Activated CD4-positive, alpha-beta memory T cell treated with anti-CD3 and anti-CD28 coated beads, Interleukin-2, amount 10 ng/mL, durations not matched to agents 7 days and 5 days (primary cell): ENCODE measurements at regions of chr6 and their contacts with region 1.

Region 1: DNA sequence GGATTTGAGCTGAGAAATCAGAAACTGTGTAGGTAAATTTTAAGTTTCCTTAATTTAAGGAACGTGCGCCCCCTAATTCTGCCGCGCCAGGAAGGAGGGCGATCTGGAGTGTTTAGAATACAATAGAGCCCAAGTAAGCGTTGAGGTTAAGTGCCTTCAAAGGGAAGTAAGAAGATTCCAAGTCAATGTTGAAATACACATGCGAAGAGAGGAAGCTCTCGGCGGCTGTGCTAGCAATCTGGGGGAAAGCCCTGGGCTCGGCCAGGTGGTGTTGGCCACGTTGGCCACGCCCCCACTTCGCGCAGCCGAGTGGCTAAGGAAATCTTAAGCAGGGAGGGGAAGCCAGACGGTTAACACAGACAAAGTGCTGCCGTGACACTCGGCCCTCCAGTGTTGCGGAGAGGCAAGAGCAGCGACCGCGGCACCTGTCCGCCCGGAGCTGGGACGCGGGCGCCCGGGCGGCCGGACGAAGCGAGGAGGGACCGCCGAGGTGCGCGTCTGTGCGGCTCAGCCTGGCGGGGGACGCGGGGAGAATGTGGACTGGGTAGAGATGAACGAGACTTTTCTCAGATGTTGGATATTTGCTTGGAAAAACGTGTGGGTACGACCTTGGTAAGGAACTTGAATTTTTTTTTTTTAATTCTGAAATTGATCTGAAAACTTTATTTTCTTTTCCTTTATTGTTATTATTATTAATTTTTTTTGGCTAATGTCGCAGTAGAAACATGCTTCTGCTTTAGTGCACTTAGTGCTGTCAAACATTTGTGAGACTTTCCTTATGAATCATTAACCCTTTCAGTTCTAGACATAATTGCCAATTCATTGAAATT is at the start of gene PRDM1:
- DNase-seq: peak; percentile 90
- H3K4me3 Mint-ChIP-seq: peak within 1 kb of the TSS; percentile 97
- H3K27ac Mint-ChIP-seq: peak within 1 kb of the TSS; percentile 71
- H3K4me1 Mint-ChIP-seq: peaks cover 68% of the 10 kb centered on the region
- H3K27me3 Mint-ChIP-seq: no peaks in the 10 kb centered on the region
- total RNA-seq, gene PRDM1: 112 to 115 TPM

Region 2: GRCh38 chr6:105431226-105431625 is 655.0 kb before region 1 on chr6:
- CTCF ChIA-PET with region 1: interaction called, 10 read pairs
- POLR2A ChIA-PET with region 1: no interaction called
- DNase-seq: no peak
- H3K4me3 Mint-ChIP-seq: no peak overlapping the region
- H3K27ac Mint-ChIP-seq: no peak overlapping the region
- H3K4me1 Mint-ChIP-seq: peaks cover 3% of the 10 kb centered on the region
- H3K27me3 Mint-ChIP-seq: peaks cover 4% of the 10 kb centered on the region

Region 3: GRCh38 chr6:105646391-105646867 is 439.8 kb before region 1 on chr6:
- CTCF ChIA-PET with region 1: interaction called, 4 read pairs
- POLR2A ChIA-PET with region 1: interaction called, 50 read pairs
- DNase-seq: peak; percentile 77
- H3K4me3 Mint-ChIP-seq: peak overlapping the region; percentile 40
- H3K27ac Mint-ChIP-seq: peak overlapping the region; percentile 98
- H3K4me1 Mint-ChIP-seq: peaks cover 86% of the 10 kb centered on the region
- H3K27me3 Mint-ChIP-seq: no peaks in the 10 kb centered on the region

Region 4: GRCh38 chr6:105898286-105898685 is 187.9 kb before region 1 on chr6:
- CTCF ChIA-PET with region 1: interaction called, 7 read pairs
- POLR2A ChIA-PET with region 1: interaction called, 10 read pairs
- DNase-seq: peak; percentile 62
- H3K4me3 Mint-ChIP-seq: no peak overlapping the region
- H3K27ac Mint-ChIP-seq: no peak overlapping the region
- H3K4me1 Mint-ChIP-seq: peaks cover 27% of the 10 kb centered on the region
- H3K27me3 Mint-ChIP-seq: no peaks in the 10 kb centered on the region

Region 5: GRCh38 chr6:105981002-105981887 is 105.0 kb before region 1 on chr6:
- CTCF ChIA-PET with region 1: interaction called, 3 read pairs
- POLR2A ChIA-PET with region 1: interaction called, 14 read pairs
- DNase-seq: peak; percentile 70
- H3K4me3 Mint-ChIP-seq: peak overlapping the region; percentile 87
- H3K27ac Mint-ChIP-seq: peak overlapping the region; percentile 93
- H3K4me1 Mint-ChIP-seq: peaks cover 78% of the 10 kb centered on the region
- H3K27me3 Mint-ChIP-seq: no peaks in the 10 kb centered on the region

Region 6: DNA sequence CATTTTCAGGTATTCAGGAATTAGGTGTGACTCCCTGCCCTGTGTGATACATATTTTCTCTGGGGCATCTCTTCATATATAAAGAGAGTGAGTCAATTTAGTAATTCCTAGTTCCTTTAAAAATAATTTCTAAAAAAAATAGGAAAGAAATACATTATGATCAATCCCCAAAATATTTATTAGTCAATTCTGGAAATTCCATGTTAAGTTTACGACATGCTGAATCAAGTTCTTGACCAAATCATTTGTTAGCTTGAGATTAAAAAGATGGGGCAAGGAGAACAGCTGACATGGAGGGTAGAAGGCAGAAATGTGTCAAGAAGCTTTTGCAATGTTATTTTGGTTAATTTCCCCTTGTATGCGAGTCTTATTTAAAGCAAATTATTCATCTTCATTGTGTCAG is 22.8 kb before region 1 on chr6:
- CTCF ChIA-PET with region 1: no interaction called
- POLR2A ChIA-PET with region 1: no interaction called
- DNase-seq: no peak
- H3K4me3 Mint-ChIP-seq: no peak overlapping the region
- H3K27ac Mint-ChIP-seq: no peak overlapping the region
- H3K4me1 Mint-ChIP-seq: peaks cover 2% of the 10 kb centered on the region
- H3K27me3 Mint-ChIP-seq: no peaks in the 10 kb centered on the region

Region 7: DNA sequence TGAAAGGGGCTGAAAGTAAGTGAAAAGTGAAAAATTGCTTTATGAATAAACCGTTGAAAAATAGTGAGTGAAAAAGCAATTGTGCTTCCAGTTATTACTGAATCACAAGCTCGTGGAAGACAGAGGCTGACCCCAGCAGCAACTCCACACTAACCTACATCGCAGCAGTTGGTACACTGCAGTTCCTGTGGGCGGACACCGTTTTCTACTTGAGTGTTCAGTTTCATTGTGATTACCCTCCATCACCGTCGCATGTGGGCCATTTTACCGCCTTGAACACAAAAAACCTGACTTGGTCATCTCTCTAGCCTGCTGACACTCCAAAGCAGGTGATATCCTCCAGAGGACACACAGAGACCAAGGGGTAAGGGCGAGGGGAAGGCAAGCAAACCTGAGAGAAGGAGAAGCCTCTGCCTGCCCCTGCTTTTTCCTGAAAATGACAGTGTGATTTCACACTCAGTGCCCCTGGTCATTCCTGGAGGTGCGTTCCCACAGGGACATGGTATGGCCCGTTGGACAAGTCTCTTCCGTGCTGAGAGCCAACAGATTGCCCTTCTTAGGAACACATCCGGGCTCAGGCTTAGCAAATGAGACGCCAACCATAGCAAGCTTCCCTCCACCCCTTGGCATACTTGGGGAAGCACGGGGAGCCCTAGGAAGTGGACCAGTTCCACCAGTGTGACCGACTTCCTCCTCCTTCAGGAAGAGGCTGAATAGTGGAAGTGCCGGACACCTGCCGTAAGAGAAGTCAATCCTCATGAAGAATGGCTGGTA is 28.5 kb after region 1 on chr6:
- CTCF ChIA-PET with region 1: interaction called, 8 read pairs
- POLR2A ChIA-PET with region 1: interaction called, 14 read pairs
- DNase-seq: peak; percentile 77
- H3K4me3 Mint-ChIP-seq: peak overlapping the region; percentile 36
- H3K27ac Mint-ChIP-seq: peak overlapping the region; percentile 85
- H3K4me1 Mint-ChIP-seq: peaks cover 95% of the 10 kb centered on the region
- H3K27me3 Mint-ChIP-seq: peaks cover 5% of the 10 kb centered on the region

Region 8: DNA sequence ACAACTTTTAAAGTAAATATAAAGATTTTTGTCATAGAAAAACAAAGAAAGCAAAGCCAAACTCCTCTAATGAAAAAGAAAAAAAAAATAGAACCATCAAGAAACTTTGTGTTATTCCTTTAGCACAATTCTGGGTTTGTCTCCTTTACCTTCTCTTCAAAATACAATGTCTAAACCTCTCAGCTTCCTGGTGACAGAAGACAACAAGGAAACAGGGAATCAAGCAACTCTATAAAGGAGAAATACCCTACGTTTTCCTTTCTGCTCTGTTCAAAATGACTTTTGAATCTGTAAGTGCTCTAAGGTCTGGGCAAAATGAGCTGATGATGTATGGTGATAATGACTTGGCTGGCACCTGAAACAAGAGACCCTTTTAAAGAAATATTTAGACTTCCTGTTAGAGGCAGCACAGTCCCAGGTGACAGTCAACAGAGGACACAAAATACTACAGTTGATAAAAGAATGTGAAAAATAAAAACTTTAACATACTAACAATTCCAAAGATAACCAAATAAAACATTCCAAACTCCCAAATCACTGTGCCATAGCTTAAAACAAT is 101.3 kb after region 1 on chr6:
- CTCF ChIA-PET with region 1: interaction called, 3 read pairs
- POLR2A ChIA-PET with region 1: interaction called, 12 read pairs
- DNase-seq: no peak
- H3K4me3 Mint-ChIP-seq: no peak overlapping the region
- H3K27ac Mint-ChIP-seq: peak overlapping the region; percentile 63
- H3K4me1 Mint-ChIP-seq: peaks cover 68% of the 10 kb centered on the region
- H3K27me3 Mint-ChIP-seq: no peaks in the 10 kb centered on the region